OCI-LY7 (cell line): ENCODE measurements at regions of chr11 and their contacts with region 1.

Region 1: DNA sequence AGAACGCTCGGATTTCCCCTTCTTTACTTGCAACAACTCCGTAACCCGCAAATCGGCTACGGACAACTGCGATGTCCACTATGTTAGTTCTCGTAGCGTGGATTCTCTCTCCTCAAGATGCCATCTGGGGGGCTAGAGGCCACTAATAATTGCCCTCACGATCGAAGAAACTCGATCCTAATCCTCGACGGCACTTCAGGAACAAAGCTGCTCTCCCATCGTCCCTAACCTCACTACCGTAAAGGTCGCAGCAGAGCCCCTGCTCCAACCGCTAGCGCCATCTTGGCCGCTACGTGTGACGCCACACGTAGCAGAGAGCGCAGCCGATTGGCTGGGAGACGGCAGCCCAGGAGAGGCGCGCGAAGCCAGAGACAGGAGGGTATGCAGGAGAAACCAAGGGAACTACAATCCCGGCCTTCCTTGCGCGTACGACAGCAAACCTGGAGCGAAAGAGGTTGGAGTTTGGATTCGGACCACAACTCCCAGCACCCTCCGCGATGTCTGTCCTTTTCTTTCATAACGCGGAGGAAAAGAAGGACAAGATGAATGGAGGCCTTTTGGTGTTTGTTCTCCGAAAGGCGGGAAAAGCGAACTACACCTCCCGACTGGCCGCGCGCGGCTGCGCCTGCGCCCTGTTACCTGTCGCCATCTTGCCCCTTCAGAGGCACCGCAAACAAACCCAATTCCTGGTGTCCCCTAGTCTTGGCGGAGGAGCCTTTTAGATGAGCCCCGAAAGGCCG is at the start of gene EMSY:
- DNase-seq: peak; percentile 97
- H3K4me3 ChIP-seq: peak within 1 kb of the TSS; percentile 99
- H3K27ac ChIP-seq: peak within 1 kb of the TSS; percentile 64
- H3K4me1 ChIP-seq: peaks cover 19% of the 10 kb centered on the region
- CTCF ChIP-seq: no peak
- total RNA-seq, gene EMSY: 26.3 and 45.5 TPM in 2 replicates

Region 2: DNA sequence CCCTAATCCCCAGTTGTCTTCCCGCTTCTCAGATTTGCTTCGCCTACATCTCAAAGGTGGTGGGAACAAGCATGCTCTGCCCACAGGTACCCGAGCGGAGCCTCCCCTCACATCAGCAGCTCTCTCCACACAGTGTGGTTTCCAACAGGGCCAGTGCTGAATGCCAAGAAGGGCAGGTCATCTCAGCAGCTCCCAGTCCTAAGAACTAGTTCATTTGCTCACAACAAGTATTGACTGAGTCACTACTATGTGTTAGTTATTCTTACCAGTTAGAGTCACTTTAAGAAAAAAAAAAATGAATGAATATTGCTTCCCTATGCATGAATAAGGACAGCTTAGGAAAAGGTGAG is 129.8 kb before region 1 on chr11:
- CTCF ChIA-PET with region 1: no interaction called
- POLR2A ChIA-PET with region 1: no interaction called
- intact Hi-C with region 1: no loop called
- DNase-seq: no peak
- H3K4me3 ChIP-seq: no peak overlapping the region
- H3K27ac ChIP-seq: no peak overlapping the region
- H3K4me1 ChIP-seq: no peaks in the 10 kb centered on the region
- CTCF ChIP-seq: no peak

Region 3: DNA sequence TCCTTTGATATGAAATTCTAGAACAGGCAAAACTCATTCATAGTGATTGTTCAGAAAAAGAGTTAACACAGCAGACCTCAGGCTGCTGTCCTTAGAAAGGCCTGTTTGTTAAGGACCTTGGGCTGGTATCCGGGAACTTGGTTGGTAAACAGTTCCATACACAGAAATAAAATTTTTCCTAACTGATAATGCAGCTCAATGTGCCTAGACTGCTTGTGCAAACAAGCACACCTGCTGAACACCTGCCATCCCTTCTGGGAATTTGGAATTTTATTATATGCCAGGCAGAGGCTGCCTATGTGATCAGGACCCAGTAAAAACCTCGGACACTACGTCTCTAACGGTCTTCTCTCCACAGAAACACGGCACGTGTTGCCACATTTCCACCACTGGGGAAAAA is 75.1 kb before region 1 on chr11:
- CTCF ChIA-PET with region 1: no interaction called
- POLR2A ChIA-PET with region 1: no interaction called
- intact Hi-C with region 1: no loop called
- DNase-seq: no peak
- H3K4me3 ChIP-seq: no peak overlapping the region
- H3K27ac ChIP-seq: no peak overlapping the region
- H3K4me1 ChIP-seq: peaks cover 13% of the 10 kb centered on the region
- CTCF ChIP-seq: no peak

Region 4: DNA sequence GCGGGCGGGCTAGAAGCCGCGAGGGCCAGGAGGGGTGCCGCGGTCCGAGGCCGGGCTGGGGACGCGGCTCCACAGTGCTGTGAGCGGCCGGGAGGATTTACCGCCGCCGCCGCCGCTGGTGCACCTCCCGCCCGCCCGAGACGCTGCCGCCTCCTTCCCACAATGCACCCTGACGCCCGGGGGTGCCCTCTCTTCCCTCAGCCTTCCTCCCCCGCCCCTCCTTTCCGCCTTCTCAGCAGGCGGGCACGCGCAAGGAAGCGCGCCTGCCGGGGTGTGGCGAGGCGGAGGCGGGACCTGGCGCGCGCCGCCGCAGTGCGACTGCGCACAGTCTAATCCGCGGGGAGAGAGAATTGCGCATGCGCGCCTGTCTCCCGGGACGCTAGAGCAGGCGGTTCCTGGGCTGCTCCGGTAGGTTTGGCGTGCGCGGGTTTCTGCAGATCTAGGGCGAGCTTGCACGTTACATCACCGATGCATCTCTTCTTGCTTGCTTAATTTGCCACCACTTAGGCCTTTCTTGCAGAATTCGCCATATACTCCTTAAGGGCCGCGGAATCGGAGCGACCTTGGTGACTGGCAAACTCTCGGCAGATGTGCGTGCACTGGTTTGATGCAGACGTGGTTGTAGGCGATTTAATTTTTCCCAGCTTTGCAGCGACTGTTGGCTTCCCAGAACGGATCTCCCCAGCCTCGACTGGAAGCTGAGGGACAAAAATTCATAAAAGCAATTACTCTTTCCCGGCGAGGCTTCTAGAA is 63.4 kb before region 1 on chr11 and contains the starts of genes GVQW3 and THAP12:
- CTCF ChIA-PET with region 1: no interaction called
- POLR2A ChIA-PET with region 1: interaction called, 6 read pairs
- intact Hi-C with region 1: loop called (anchors 1 kb)
- DNase-seq: peak; percentile 98
- H3K4me3 ChIP-seq: peak within 1 kb of the TSS; percentile 94
- H3K27ac ChIP-seq: peak within 1 kb of the TSS; percentile 59
- H3K4me1 ChIP-seq: peaks cover 54% of the 10 kb centered on the region
- CTCF ChIP-seq: peak; percentile 30
- total RNA-seq, gene GVQW3: 14.4 and 15.4 TPM in 2 replicates
- total RNA-seq, gene THAP12: 52.5 and 55.7 TPM in 2 replicates

Region 5: GRCh38 chr11:76419896-76420295 is 24.7 kb before region 1 on chr11:
- CTCF ChIA-PET with region 1: no interaction called
- POLR2A ChIA-PET with region 1: no interaction called
- intact Hi-C with region 1: no loop called
- DNase-seq: peak; percentile 48
- H3K4me3 ChIP-seq: no peak overlapping the region
- H3K27ac ChIP-seq: no peak overlapping the region
- H3K4me1 ChIP-seq: no peaks in the 10 kb centered on the region
- CTCF ChIP-seq: peak; percentile 82